Sigmoid colon (tissue), 7 donors: ENCODE measurements at regions of chr7 and their contacts with region 1.

Region 1: GRCh38 chr7:11427686-11428273 is 404.2 kb downstream of the THSD7A start:
- DNase-seq: no peak
- H3K4me3 ChIP-seq: no peak overlapping the region
- H3K27ac ChIP-seq: no peak overlapping the region
- H3K4me1 ChIP-seq: no peaks in the 10 kb centered on the region
- H3K27me3 ChIP-seq: no peaks in the 10 kb centered on the region
- CTCF ChIP-seq: peak; percentile 36 to 66 (median 50)
- EP300 ChIP-seq: no peak
- POLR2A ChIP-seq: no peak

Region 2: DNA sequence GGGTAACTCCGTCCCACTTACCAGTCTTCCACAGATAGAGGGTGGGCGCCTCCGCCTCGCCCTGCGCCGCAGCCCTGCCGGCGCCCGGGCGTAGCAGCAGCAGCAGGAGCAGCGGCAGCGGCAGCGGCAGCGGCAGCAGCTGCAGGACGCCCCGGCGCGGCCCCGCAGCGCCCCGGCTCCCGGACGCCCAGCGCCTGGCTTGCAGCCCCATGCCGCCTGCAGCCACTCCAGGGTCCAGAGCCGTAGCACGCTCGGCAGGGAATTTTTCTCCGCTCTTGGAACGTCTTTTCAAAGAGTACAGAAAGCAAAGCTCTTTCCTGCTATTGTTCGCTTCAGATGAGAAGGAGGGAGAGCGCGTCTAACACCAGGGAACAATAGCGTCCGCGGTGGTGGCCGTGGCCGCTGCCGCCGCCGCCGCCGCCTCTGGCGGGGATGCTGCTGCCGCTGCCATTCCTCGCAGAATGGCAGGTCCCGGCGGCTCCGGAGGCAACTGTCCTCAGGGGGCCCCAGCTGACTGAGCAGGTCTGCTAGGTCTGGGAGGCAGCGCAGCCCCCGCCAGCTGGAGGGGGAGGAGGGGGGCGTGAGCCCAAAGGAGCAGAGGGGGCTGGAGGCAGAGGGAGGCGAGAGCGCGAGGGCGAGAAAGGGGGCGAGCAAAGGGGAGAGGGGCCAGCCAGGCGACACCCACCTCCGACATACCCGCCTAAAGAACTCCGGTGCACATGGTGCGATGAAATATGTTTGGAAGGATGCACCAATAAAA is 404.1 kb after region 1 on chr7 and contains the start of gene THSD7A:
- intact Hi-C with region 1: loop called (anchors 5 kb)
- DNase-seq: peak; percentile 66
- H3K4me3 ChIP-seq: peak within 1 kb of the TSS; percentile 48 to 64 (median 56)
- H3K27ac ChIP-seq: peak within 1 kb of the TSS; percentile 48 to 79 (median 70)
- H3K4me1 ChIP-seq: peaks cover 0 to 24% (median 7%) of the 10 kb centered on the region in 4 donors
- H3K27me3 ChIP-seq: no peaks in the 10 kb centered on the region
- CTCF ChIP-seq: no peak
- EP300 ChIP-seq: no peak
- POLR2A ChIP-seq: no peak
- total RNA-seq, gene THSD7A: 5.0 to 6.9 (median 6.1) TPM

Region 3: DNA sequence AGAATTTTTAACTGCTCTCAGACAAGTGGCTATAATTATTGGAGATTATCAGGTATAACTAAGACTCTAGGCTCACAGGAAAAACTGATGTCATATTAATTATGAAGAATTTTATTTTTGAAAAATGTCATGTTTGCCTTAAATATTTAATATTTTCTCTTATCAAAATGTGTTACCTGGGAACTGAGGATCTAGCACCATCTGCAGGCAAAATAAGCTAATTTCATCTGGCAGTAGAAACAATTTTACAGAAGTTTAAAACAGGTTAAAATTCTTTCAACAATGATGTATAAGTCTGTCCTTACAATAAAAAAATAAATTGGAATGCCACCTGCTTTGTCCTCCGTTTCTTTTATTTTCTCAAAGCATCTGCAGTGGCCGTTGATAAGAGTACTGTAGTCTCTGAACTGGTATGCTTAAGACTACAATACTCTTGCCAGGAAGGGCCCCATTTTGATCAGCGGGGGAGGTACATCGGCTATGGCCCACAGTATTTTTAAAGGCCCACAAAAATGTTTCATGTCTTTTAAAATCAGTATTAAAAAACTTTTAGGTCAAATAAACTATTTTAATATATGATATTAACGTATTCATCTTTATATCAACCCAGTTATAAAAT is 894.6 kb after region 1 on chr7:
- intact Hi-C with region 1: loop called (anchors 5 kb)
- DNase-seq: no peak
- H3K4me3 ChIP-seq: no peak overlapping the region
- H3K27ac ChIP-seq: no peak overlapping the region
- H3K4me1 ChIP-seq: no peaks in the 10 kb centered on the region
- H3K27me3 ChIP-seq: no peaks in the 10 kb centered on the region
- CTCF ChIP-seq: peak; percentile 13 to 63 (median 38)
- EP300 ChIP-seq: no peak
- POLR2A ChIP-seq: no peak

Region 4: GRCh38 chr7:12490117-12490688 is 1062.4 kb after region 1 on chr7:
- intact Hi-C with region 1: loop called (anchors 10 kb)
- DNase-seq: no peak
- H3K4me3 ChIP-seq: no peak overlapping the region
- H3K27ac ChIP-seq: no peak overlapping the region
- H3K4me1 ChIP-seq: no peaks in the 10 kb centered on the region
- H3K27me3 ChIP-seq: no peaks in the 10 kb centered on the region
- CTCF ChIP-seq: peak in 1 of 4 experiments; percentile 28
- EP300 ChIP-seq: no peak
- POLR2A ChIP-seq: no peak